Activated CD4-positive, alpha-beta T cell treated with anti-CD3 and anti-CD28 coated beads for 36 hours (primary cell): ENCODE measurements at regions of chr17 and their contacts with region 1.

Region 1: GRCh38 chr17:16380640-16381495 is at the start of gene UBB:
- DNase-seq: peak; percentile 98
- ATAC-seq: peak; percentile 97
- H3K4me3 Mint-ChIP-seq: peak within 1 kb of the TSS; percentile 90
- H3K27ac Mint-ChIP-seq: peak within 1 kb of the TSS; percentile 98
- H3K4me1 Mint-ChIP-seq: peaks cover 35% of the 10 kb centered on the region
- H3K27me3 Mint-ChIP-seq: no peaks in the 10 kb centered on the region
- total RNA-seq, gene UBB: 1,578 to 1,806 TPM

Region 2: DNA sequence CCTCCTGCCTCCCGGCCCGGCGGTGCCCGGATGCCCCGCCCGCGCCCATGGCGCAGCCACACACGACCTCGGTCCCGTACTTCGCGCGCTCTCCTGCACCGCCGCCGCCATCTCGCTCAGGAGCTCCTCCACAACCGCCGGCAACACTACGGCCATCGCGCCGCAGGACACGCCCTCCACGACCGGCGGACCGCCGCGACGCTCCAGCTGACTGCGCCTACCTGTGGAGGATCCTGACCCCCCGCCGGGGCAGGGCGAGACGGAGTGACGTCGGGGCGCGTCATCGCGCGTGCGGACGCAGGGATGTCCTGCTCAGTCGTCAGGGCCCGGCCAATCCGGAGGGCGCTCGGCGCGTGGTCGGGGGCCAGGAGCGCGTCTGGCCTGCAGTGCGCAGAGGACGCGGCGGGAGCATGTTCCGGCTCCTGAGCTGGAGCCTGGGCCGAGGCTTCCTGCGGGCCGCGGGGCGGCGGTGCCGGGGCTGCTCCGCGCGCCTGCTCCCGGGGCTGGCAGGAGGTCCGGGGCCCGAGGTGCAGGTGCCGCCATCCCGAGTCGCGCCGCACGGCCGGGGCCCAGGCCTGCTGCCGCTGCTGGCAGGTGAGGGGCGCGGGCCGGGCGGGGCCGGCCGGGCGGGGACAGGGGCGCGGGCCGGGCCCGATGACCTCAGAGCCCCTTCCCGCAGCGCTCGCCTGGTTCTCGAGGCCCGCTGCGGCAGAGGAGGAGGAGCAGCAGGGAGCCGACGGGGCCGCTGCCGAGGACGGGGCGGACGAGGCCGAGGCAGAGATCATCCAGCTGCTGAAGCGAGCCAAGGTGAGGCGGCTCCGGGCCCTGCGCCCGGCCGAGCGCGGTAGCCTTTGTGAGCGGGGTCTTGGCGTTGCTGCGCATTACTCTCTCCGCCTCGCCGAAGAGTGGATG is 381.2 kb before region 1 on chr17 and contains the starts of genes TTC19 and ZSWIM7:
- CTCF ChIA-PET with region 1: no interaction called
- POLR2A ChIA-PET with region 1: no interaction called
- intact Hi-C with region 1: loop called in 1 of 2 experiments (anchors 1 kb)
- DNase-seq: peak; percentile 97
- ATAC-seq: peak; percentile 88
- H3K4me3 Mint-ChIP-seq: peak within 1 kb of the TSS; percentile 90
- H3K27ac Mint-ChIP-seq: peak within 1 kb of the TSS; percentile 97
- H3K4me1 Mint-ChIP-seq: peaks cover 22% of the 10 kb centered on the region
- H3K27me3 Mint-ChIP-seq: no peaks in the 10 kb centered on the region
- total RNA-seq, gene TTC19: 21.1 to 22.0 TPM
- total RNA-seq, gene ZSWIM7: 11.2 to 11.7 TPM

Region 3: DNA sequence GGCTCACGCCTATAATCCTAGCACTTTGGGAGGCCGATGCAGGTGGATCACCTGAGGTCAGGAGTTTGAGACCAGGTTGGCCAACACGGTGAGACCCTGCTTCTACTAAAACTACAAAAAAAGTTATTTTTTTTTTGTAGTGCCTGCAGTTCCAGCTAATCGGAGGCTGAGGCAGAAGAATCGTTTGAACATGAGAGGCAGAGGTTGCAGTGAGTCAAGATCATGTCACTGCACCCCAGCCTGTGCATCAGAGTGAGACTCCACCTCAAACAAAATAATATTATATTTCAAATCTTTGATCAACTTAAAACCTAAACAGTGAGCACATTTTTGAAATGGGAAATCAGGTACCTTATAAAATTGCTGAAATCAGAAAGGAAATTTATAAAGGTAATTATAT is 202.0 kb before region 1 on chr17:
- CTCF ChIA-PET with region 1: no interaction called
- POLR2A ChIA-PET with region 1: no interaction called
- intact Hi-C with region 1: no loop called
- DNase-seq: no peak
- ATAC-seq: no peak
- H3K4me3 Mint-ChIP-seq: no peak overlapping the region
- H3K27ac Mint-ChIP-seq: no peak overlapping the region
- H3K4me1 Mint-ChIP-seq: peaks cover 9% of the 10 kb centered on the region
- H3K27me3 Mint-ChIP-seq: no peaks in the 10 kb centered on the region

Region 4: GRCh38 chr17:16285957-16286640 is 94.8 kb before region 1 on chr17:
- CTCF ChIA-PET with region 1: interaction called, 3 read pairs
- POLR2A ChIA-PET with region 1: interaction called, 5 read pairs
- intact Hi-C with region 1: loop called in 1 of 2 experiments (anchors 1 kb)
- DNase-seq: peak; percentile 90
- ATAC-seq: peak; percentile 94
- H3K4me3 Mint-ChIP-seq: peak overlapping the region; percentile 66
- H3K27ac Mint-ChIP-seq: peak overlapping the region; percentile 96
- H3K4me1 Mint-ChIP-seq: peaks cover 53% of the 10 kb centered on the region
- H3K27me3 Mint-ChIP-seq: no peaks in the 10 kb centered on the region

Region 5: GRCh38 chr17:16415031-16415924 is 34.4 kb after region 1 on chr17 and contains the start of gene TRPV2:
- CTCF ChIA-PET with region 1: interaction called, 10 read pairs
- POLR2A ChIA-PET with region 1: interaction called, 13 read pairs
- intact Hi-C with region 1: loop called (anchors 1 kb)
- DNase-seq: peak; percentile 72
- ATAC-seq: peak; percentile 15
- H3K4me3 Mint-ChIP-seq: peak within 1 kb of the TSS; percentile 100
- H3K27ac Mint-ChIP-seq: peak within 1 kb of the TSS; percentile 99
- H3K4me1 Mint-ChIP-seq: peaks cover 46% of the 10 kb centered on the region
- H3K27me3 Mint-ChIP-seq: no peaks in the 10 kb centered on the region
- total RNA-seq, gene TRPV2: 24.3 to 35.6 TPM

Region 6: GRCh38 chr17:16521070-16521727 is 140.3 kb after region 1 on chr17:
- CTCF ChIA-PET with region 1: interaction called, 4 read pairs
- POLR2A ChIA-PET with region 1: no interaction called
- intact Hi-C with region 1: loop called (anchors 1 to 2 kb)
- DNase-seq: peak; percentile 80
- ATAC-seq: peak; percentile 95
- H3K4me3 Mint-ChIP-seq: no peak overlapping the region
- H3K27ac Mint-ChIP-seq: no peak overlapping the region
- H3K4me1 Mint-ChIP-seq: peaks cover 8% of the 10 kb centered on the region
- H3K27me3 Mint-ChIP-seq: peaks cover 31% of the 10 kb centered on the region

Region 7: DNA sequence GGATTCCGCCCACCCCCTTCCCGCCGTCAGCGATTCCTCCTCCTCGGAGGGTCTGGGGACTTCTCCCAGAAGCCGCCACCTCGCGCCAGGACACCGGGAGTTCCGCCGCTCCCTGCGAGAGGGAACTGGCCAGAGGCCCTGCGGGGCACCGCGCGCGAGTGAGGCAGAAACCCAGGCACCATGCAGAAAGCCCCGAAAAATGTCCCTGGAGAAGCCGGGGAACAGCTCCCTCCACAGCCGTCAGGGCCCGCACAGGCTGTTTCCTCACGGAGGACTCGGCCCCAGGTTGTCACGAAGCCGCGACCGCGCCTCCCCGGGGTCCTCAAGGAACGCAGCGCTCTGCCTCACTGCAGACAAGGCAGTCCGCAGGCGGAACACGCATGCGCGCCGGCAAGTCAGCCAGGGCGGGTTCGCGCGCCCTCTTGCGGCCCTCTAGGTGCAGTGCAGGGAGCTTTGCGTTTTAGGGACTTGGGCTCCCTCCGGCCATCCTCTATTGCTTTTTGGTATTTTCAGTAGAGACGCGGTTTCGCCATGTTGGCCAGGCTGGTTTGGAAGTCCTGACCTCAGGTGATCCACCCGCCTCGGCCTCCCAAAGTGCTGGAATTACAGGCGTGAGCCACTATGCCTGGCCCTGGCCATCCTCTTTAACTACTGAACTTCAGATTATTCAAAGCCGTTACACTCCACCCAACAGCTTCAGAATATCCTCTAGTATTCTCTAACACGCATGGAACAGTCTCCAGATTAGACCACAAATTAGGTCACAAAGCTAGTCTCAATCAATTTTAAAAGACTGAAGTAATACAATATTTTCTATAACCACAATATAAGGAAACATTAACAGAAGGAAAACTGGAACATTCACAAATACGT is 208.5 kb after region 1 on chr17:
- CTCF ChIA-PET with region 1: interaction called, 3 read pairs
- POLR2A ChIA-PET with region 1: no interaction called
- intact Hi-C with region 1: loop called in 1 of 2 experiments (anchors 10 kb)
- DNase-seq: peak; percentile 95
- ATAC-seq: peak; percentile 90
- H3K4me3 Mint-ChIP-seq: peak overlapping the region; percentile 64
- H3K27ac Mint-ChIP-seq: no peak overlapping the region
- H3K4me1 Mint-ChIP-seq: peaks cover 8% of the 10 kb centered on the region
- H3K27me3 Mint-ChIP-seq: peaks cover 34% of the 10 kb centered on the region